ENCODE measurements at regions of chr1 and their contacts with region 1.

Region 1: DNA sequence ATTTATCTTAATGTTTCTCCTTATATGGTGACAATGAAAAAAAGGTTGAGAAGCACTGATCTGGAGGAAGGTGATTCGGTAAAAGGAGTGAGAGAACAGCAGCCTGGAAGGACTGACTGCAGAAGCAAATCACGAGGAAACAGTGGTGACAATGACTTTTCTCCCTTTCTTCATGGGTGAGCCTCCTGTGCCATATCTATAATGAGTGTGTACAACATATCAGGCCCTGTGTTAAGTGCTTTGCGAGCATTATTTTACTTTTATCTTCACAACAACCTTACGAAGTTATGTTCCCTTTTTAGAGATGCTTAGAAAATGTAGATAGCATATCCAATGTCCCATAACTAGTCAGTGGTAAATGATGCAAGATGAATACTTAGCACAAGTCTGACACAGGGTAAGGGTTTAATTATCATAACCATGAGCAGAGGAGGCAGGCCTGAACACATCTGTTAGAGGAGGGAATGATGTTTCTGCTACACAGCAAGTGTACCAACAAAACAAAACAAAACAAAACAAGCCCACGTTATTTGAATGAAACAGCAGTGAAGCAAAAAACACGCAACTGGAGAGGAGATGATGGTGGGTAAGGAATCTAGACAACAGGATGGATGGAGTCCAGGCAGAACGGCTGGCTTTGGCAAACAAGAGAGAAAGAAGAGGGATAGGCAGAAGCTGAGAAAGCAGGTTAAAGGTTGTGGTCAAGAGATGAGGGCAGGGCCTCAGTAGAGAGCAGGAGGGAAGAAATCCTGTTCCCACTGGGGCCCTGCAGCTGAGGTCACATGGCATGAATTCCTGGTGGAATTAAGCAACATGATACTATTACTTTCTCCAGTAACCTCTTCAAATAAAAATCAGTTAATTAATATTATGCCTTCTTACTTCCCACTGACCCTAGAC is 29.6 kb downstream of the GNG12 start:
- DNase-seq: no peak
- H3K4me3 ChIP-seq: no peak overlapping the region
- H3K27ac ChIP-seq: no peak overlapping the region
- H3K4me1 ChIP-seq: no peaks in the 10 kb centered on the region
- H3K27me3 ChIP-seq: no peaks in the 10 kb centered on the region
- CTCF ChIP-seq: no peak
- POLR2A ChIP-seq: no peak

Region 2: DNA sequence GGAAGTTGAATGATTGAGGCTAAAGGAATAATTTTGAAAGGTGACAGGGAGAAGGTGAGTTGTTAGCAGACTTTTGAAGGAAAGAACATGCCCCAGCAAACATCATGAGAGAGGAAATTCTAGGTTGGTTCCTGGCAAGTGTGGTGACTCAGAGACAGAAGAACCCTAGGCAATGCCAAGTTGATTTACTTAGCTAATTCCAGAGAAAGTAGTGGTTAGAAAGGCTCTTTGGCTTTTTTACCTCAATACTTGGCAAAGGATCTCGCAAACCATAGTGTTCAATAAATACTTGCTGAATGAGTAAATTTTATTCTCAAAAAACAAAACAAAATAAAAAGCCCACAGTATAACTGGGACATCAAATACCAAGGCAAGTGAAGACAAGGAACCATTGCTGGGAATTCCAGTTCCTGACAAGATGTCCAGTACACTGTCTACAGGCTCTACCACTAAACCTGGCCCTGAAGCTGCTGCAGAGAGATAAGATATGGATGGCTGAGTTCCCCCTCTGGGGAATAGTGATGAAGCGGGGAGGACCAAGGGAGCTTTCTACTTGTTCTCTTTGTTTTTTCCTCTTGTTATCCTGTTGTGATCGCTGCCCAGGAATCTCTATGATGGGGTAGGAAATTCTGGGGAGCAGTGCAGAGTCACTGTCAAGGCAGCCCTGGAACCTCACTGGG is 447.7 kb before region 1 on chr1:
- intact Hi-C with region 1: no loop called
- DNase-seq: no peak
- H3K4me3 ChIP-seq: no peak overlapping the region
- H3K27ac ChIP-seq: peak overlapping the region; percentile 15 to 68
- H3K4me1 ChIP-seq: peaks cover 0 to 9% of the 10 kb centered on the region in 2 donors
- H3K27me3 ChIP-seq: no peaks in the 10 kb centered on the region
- CTCF ChIP-seq: no peak
- POLR2A ChIP-seq: no peak

Region 3: DNA sequence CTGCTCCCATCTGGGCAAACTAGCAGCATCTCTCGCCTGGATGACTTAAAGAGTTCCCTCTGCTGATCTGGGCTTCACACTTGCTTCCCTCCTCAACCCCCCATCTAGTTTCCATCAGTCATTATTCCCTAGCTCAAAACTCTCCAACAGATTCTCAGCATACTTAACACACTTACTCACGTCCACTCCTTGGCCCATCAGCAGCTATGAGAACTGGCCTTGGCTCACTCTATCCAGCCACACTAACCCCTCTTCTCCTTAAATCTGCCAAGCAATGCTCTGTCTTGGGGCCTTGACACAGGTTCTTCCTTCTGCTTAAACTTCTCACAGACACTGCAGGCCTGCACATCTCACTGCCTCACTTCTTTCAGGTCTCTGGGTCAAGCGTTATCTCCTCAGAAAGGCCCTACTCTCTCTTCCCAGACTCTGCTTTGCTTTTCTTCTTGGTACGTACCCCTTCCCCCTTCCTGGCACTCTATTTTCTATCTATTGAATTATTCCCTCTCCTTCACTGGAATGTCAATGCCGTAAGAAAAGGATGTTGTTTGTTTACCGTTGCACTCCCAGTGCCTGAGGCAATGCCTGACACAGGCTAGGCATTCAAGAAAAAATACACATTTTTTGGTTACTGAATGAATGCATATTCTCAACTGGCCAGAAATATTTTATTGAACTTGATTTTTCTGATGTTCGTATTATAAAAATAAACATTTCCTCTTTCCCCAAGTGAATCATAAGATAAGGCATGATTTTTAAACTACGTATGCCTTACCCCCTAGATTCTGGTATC is 11.7 kb before region 1 on chr1:
- intact Hi-C with region 1: loop called (anchors 1 kb)
- DNase-seq: no peak
- H3K4me3 ChIP-seq: no peak overlapping the region
- H3K27ac ChIP-seq: peak overlapping the region; percentile 15 to 62
- H3K4me1 ChIP-seq: no peaks in the 10 kb centered on the region
- H3K27me3 ChIP-seq: no peaks in the 10 kb centered on the region
- CTCF ChIP-seq: no peak
- POLR2A ChIP-seq: no peak